CD4-positive, alpha-beta memory T cell (primary cell): ENCODE measurements at regions of chr6 and their contacts with region 1.

Region 1: GRCh38 chr6:45946352-45946751 is 69.3 kb downstream of the CLIC5 start:
- DNase-seq: no peak
- H3K4me3 ChIP-seq: no peak overlapping the region
- H3K4me3 Mint-ChIP-seq: no peak overlapping the region
- H3K27ac ChIP-seq: no peak overlapping the region
- H3K27ac Mint-ChIP-seq: no peak overlapping the region
- H3K4me1 ChIP-seq: no peaks in the 10 kb centered on the region
- H3K4me1 Mint-ChIP-seq: peaks cover 0 to 1% (median under 1%) of the 10 kb centered on the region in 4 donors
- H3K27me3 ChIP-seq: no peaks in the 10 kb centered on the region
- H3K27me3 Mint-ChIP-seq: no peaks in the 10 kb centered on the region

Region 2: DNA sequence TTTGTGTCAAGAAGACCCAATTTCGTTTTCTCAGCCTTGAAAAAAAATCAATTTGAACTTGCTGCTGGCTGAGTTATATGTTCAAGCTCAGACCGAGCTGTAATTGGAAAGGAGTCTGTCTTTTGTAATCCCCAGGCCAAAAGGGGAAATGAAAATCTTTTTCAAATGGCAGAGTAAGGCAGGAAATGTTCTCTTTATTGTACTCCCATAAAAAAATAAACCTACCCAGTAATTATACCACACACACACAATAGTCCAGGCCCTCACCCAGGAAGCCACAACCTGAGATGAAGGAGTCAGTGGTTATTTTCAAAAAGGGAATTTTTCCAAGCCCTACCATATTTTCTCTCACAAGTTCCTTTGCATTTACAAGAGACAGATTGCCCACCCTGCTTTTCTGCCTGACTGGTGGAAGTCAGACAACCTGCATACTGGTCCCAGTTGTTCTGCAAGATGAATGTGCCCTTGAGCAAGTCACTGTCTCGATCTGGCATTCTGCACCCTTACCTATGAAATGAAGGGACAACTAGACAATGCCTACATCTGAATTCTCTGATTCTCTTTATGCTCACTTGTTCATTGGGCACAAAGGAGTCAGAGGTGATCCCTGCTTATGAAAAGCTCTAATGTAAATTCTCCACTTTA is 24.1 kb after region 1 on chr6:
- CTCF ChIA-PET with region 1: no interaction called
- POLR2A ChIA-PET with region 1: no interaction called
- intact Hi-C with region 1: no loop called
- DNase-seq: no peak
- H3K4me3 ChIP-seq: no peak overlapping the region
- H3K4me3 Mint-ChIP-seq: peak overlapping the region in 1 of 8 donors; percentile 51
- H3K27ac ChIP-seq: no peak overlapping the region
- H3K27ac Mint-ChIP-seq: peak overlapping the region in 2 of 7 donors; percentile 4 to 55
- H3K4me1 ChIP-seq: peaks cover 12% of the 10 kb centered on the region
- H3K4me1 Mint-ChIP-seq: peaks cover 8 to 26% (median 15%) of the 10 kb centered on the region in 4 donors
- H3K27me3 ChIP-seq: no peaks in the 10 kb centered on the region
- H3K27me3 Mint-ChIP-seq: no peaks in the 10 kb centered on the region

Region 3: GRCh38 chr6:46011241-46012085 is 65.1 kb after region 1 on chr6:
- CTCF ChIA-PET with region 1: no interaction called
- POLR2A ChIA-PET with region 1: no interaction called
- intact Hi-C with region 1: loop called (anchors 5 kb)
- DNase-seq: peak; percentile 72 to 92 (median 83)
- H3K4me3 ChIP-seq: peak overlapping the region; percentile 32 to 42
- H3K4me3 Mint-ChIP-seq: peak overlapping the region; percentile 67 to 99 (median 84)
- H3K27ac ChIP-seq: peak overlapping the region; percentile 71
- H3K27ac Mint-ChIP-seq: peak overlapping the region; percentile 95 to 98 (median 97)
- H3K4me1 ChIP-seq: peaks cover 56% of the 10 kb centered on the region
- H3K4me1 Mint-ChIP-seq: peaks cover 51 to 74% (median 62%) of the 10 kb centered on the region in 4 donors
- H3K27me3 ChIP-seq: no peaks in the 10 kb centered on the region
- H3K27me3 Mint-ChIP-seq: no peaks in the 10 kb centered on the region

Region 4: GRCh38 chr6:46320516-46320915 is 374.2 kb after region 1 on chr6:
- CTCF ChIA-PET with region 1: no interaction called
- POLR2A ChIA-PET with region 1: no interaction called
- intact Hi-C with region 1: no loop called
- DNase-seq: no peak
- H3K4me3 ChIP-seq: no peak overlapping the region
- H3K4me3 Mint-ChIP-seq: no peak overlapping the region
- H3K27ac ChIP-seq: no peak overlapping the region
- H3K27ac Mint-ChIP-seq: no peak overlapping the region
- H3K4me1 ChIP-seq: no peaks in the 10 kb centered on the region
- H3K4me1 Mint-ChIP-seq: peaks cover 0 to 2% (median 0%) of the 10 kb centered on the region in 4 donors
- H3K27me3 ChIP-seq: no peaks in the 10 kb centered on the region
- H3K27me3 Mint-ChIP-seq: no peaks in the 10 kb centered on the region

Region 5: GRCh38 chr6:47242483-47243386 is 1296.4 kb after region 1 on chr6:
- CTCF ChIA-PET with region 1: no interaction called
- POLR2A ChIA-PET with region 1: no interaction called
- intact Hi-C with region 1: no loop called
- DNase-seq: peak; percentile 36 to 65 (median 50)
- H3K4me3 ChIP-seq: no peak overlapping the region
- H3K4me3 Mint-ChIP-seq: peak overlapping the region in 1 of 8 donors; percentile 17
- H3K27ac ChIP-seq: no peak overlapping the region
- H3K27ac Mint-ChIP-seq: peak overlapping the region in 2 of 7 donors; percentile 39 to 71
- H3K4me1 ChIP-seq: peaks cover 7% of the 10 kb centered on the region
- H3K4me1 Mint-ChIP-seq: peaks cover 3 to 21% (median 8%) of the 10 kb centered on the region in 4 donors
- H3K27me3 ChIP-seq: no peaks in the 10 kb centered on the region
- H3K27me3 Mint-ChIP-seq: no peaks in the 10 kb centered on the region